Transverse colon (tissue), 4 donors: ENCODE measurements at regions of chr5 and their contacts with region 1.

Region 1: GRCh38 chr5:56183506-56183905 is 49.6 kb downstream of the ANKRD55 start:
- DNase-seq: no peak
- H3K4me3 ChIP-seq: no peak overlapping the region
- H3K27ac ChIP-seq: no peak overlapping the region
- H3K4me1 ChIP-seq: no peaks in the 10 kb centered on the region
- H3K27me3 ChIP-seq: no peaks in the 10 kb centered on the region
- CTCF ChIP-seq: no peak
- EP300 ChIP-seq: no peak
- POLR2A ChIP-seq: no peak

Region 2: DNA sequence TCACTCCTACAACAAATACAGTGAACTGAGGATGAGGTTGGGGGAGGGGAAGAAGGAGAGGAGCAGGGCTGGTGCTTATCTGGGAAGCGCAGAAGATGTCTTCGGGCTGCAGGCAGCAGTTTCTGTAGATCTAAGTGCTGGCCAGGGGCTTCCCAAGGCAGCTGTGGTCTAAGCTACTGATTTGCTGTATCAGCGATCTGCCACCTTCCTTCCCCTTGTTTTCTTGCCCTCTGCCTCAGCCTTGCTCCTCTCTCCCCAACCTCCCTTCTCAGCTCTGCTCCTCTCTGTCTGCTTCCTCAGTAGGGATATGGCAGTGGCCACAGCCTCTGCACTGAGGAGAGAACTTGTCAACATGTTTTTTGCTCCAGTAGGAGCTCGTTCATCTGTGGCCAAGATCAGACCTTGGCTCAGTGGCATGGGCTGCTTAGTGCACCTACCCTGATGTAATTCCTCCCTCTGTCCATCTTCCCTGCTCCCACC is 145.9 kb before region 1 on chr5:
- in situ Hi-C with region 1: no loop called
- intact Hi-C with region 1: no loop called
- DNase-seq: no peak
- H3K4me3 ChIP-seq: no peak overlapping the region
- H3K27ac ChIP-seq: no peak overlapping the region
- H3K4me1 ChIP-seq: no peaks in the 10 kb centered on the region
- H3K27me3 ChIP-seq: no peaks in the 10 kb centered on the region
- CTCF ChIP-seq: no peak
- EP300 ChIP-seq: no peak
- POLR2A ChIP-seq: no peak

Region 3: GRCh38 chr5:57684299-57684702 is 1500.8 kb after region 1 on chr5:
- in situ Hi-C with region 1: no loop called
- intact Hi-C with region 1: loop called (anchors 5 kb)
- DNase-seq: no peak
- H3K4me3 ChIP-seq: no peak overlapping the region
- H3K27ac ChIP-seq: no peak overlapping the region
- H3K4me1 ChIP-seq: no peaks in the 10 kb centered on the region
- H3K27me3 ChIP-seq: no peaks in the 10 kb centered on the region
- CTCF ChIP-seq: no peak
- EP300 ChIP-seq: no peak
- POLR2A ChIP-seq: no peak